Mammary epithelial cell (primary cell): ENCODE measurements at regions of chr19 and their contacts with region 1.

Region 1: GRCh38 chr19:2840794-2841790 is at the start of gene ZNF555:
- DNase-seq: peak; percentile 99
- H3K4me3 ChIP-seq: peak within 1 kb of the TSS; percentile 72 to 89 (median 80)
- H3K27ac ChIP-seq: peak within 1 kb of the TSS; percentile 29
- H3K4me1 ChIP-seq: peaks cover 6% of the 10 kb centered on the region
- H3K27me3 ChIP-seq: no peaks in the 10 kb centered on the region
- CTCF ChIP-seq: peak; percentile 35 to 58
- total RNA-seq, gene ZNF555: 4.6 to 7.2 TPM

Region 2: GRCh38 chr19:2016041-2016807 is 824.9 kb before region 1 on chr19:
- CTCF ChIA-PET with region 1: no interaction called
- dilution Hi-C with region 1: no loop called
- in situ Hi-C with region 1: no loop called
- intact Hi-C with region 1: no loop called
- DNase-seq: peak; percentile 66
- H3K4me3 ChIP-seq: peak overlapping the region in 1 of 3 experiments; percentile 38
- H3K27ac ChIP-seq: no peak overlapping the region
- H3K4me1 ChIP-seq: peaks cover 8% of the 10 kb centered on the region
- H3K27me3 ChIP-seq: no peaks in the 10 kb centered on the region
- CTCF ChIP-seq: no peak

Region 3: DNA sequence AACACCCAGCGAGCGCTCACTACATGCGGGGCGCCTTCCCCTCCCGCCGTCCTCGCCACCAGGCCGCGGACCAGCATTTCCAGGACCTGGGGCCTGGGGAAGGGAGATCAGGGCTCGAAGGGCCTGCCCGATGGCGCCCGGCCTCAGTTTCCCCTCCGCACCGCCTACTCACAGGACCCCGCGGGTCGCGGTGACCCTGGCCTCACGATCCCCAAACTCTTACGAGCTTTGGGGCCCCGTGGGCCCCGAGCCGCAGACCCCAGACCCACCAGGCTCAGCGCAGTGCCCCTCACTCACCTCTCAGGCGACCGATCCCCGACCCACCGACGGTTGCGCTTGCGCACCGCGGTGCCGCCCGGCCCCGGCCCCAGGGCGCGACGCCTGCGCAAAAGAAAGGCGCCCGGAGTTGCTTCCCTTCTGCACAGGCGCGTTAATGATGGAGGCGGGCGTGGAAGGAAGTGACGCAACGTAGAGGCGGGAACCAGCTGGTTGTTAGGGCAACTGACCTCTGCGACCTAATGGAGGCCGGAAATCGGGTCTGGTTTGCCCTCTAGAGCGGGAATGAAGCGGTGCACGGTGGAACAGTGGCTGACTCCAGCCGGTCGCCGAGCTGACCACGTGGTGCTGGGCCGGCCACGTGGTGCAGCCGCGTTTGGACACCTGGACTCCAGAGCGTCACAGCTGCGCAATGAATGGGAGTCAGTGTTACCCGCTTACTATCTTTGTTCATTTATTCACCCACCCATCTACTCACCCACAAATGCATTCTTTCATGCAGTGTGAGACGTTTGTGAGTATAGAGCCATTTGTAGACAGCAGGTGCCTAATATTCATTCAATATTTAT is 57.9 kb before region 1 on chr19 and contains the start of gene SGTA:
- CTCF ChIA-PET with region 1: no interaction called
- dilution Hi-C with region 1: no loop called
- in situ Hi-C with region 1: no loop called
- intact Hi-C with region 1: loop called (anchors 2 kb)
- DNase-seq: peak; percentile 99
- H3K4me3 ChIP-seq: peak within 1 kb of the TSS; percentile 89 to 98 (median 91)
- H3K27ac ChIP-seq: peak within 1 kb of the TSS; percentile 82
- H3K4me1 ChIP-seq: peaks cover 14% of the 10 kb centered on the region
- H3K27me3 ChIP-seq: no peaks in the 10 kb centered on the region
- CTCF ChIP-seq: peak; percentile 18 to 56
- total RNA-seq, gene SGTA: 52.5 to 71.3 TPM

Region 4: DNA sequence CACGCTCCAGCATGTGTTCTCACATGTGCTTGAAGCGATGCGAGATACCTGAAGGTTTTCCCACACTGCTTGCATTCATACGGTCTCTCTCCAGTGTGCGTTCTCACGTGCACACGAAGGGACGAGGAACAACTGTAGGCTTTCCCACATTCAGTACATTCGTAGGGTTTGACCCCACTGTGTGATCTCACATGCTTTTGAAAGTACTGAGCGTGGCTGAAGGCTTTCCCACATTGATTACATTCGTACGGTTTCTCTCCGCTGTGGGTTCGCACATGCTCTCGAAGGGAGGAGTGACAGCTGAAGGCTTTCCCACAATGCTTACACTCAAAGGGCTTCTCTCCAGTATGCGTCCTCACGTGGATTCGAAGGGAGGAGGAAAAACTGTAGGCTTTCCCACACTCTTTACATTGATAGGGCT is 92.4 kb after region 1 on chr19:
- CTCF ChIA-PET with region 1: no interaction called
- dilution Hi-C with region 1: no loop called
- in situ Hi-C with region 1: loop called in 1 of 2 experiments (anchors 10 kb)
- intact Hi-C with region 1: no loop called
- DNase-seq: no peak
- H3K4me3 ChIP-seq: no peak overlapping the region
- H3K27ac ChIP-seq: no peak overlapping the region
- H3K4me1 ChIP-seq: no peaks in the 10 kb centered on the region
- H3K27me3 ChIP-seq: no peaks in the 10 kb centered on the region
- CTCF ChIP-seq: no peak